ENCODE measurements at regions of chr3 and their contacts with region 1.

Region 1: DNA sequence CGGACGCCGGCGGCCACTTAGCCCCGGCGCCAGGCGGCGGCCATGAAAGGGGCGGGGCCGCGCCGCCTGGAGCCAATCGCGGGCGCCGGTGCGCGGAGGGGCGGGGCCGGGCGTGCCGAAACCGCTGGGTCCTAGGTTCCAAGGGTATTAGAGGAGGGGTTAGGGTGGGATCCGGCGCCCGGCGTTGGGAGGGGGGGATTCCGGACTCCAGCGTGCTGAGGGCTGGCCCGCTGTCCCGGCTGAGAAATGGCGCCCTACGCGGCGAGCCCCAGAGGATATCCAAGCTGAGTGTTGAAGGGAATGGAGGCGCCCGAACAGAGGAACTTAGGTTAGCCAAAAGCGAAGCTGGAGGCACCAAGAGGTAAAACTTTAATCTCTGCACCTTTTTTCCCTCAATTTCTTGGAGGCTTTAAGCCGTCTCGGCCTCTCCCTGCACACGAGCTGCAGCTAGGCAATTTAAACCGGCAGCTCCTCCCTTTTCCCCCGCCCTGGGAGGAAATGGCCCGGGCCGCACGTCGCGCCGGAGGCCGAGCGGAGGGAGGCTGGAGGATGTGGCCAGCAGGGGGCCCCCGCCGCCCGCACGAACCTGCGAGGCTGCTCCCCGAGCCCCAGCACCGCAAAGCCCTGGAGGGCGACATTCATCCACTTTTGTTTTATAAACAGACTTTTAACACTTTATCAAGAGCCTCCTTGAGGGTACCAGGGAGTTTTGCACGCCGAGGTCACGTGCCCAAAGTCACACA is at the start of gene XXYLT1:
- DNase-seq: peak; percentile 94
- ATAC-seq: peak; percentile 89
- H3K4me3 Mint-ChIP-seq: peak within 1 kb of the TSS; percentile 82
- H3K27ac Mint-ChIP-seq: peak within 1 kb of the TSS; percentile 85
- H3K4me1 Mint-ChIP-seq: peaks cover 31% of the 10 kb centered on the region
- H3K27me3 Mint-ChIP-seq: no peaks in the 10 kb centered on the region
- total RNA-seq, gene XXYLT1: 7.2 to 9.2 TPM

Region 2: DNA sequence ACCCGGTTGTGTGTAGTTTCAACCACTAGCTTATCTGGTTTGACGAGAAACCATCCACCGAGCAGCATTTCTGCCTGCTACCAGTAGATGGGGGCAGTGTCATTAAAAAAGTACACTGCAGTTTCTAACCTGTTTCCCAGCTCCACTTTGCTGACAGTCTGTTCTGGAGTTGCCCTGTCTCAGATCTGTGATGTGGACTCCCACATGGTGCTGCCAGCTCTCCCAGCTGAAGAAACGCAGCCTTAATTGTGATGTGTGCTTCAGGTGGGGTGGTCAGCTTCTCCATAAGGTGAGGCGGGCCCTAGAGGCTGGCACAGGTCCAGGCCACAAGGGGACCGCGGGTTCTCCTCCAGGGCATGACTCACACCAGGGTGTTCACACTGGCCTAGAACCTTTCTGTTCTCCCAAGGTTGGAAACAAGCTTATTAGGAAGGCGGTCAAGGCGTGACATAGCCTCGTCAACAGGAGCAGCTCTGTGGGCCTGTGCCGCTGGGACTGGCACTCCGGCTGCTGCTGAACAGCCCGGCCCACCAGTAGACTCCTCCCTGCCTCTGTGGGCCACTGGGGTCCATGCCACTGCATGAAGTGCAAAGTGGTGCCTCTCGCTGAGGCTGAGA is 588.5 kb before region 1 on chr3:
- CTCF ChIA-PET with region 1: interaction called, 28 read pairs
- DNase-seq: peak; percentile 84
- ATAC-seq: peak; percentile 61
- H3K4me3 Mint-ChIP-seq: no peak overlapping the region
- H3K27ac Mint-ChIP-seq: no peak overlapping the region
- H3K4me1 Mint-ChIP-seq: peaks cover 47% of the 10 kb centered on the region
- H3K27me3 Mint-ChIP-seq: peaks cover 37% of the 10 kb centered on the region

Region 3: GRCh38 chr3:195286115-195286872 is 15.0 kb after region 1 on chr3:
- CTCF ChIA-PET with region 1: interaction called, 18 read pairs
- DNase-seq: no peak
- ATAC-seq: no peak
- H3K4me3 Mint-ChIP-seq: no peak overlapping the region
- H3K27ac Mint-ChIP-seq: no peak overlapping the region
- H3K4me1 Mint-ChIP-seq: peaks cover 6% of the 10 kb centered on the region
- H3K27me3 Mint-ChIP-seq: no peaks in the 10 kb centered on the region

Region 4: DNA sequence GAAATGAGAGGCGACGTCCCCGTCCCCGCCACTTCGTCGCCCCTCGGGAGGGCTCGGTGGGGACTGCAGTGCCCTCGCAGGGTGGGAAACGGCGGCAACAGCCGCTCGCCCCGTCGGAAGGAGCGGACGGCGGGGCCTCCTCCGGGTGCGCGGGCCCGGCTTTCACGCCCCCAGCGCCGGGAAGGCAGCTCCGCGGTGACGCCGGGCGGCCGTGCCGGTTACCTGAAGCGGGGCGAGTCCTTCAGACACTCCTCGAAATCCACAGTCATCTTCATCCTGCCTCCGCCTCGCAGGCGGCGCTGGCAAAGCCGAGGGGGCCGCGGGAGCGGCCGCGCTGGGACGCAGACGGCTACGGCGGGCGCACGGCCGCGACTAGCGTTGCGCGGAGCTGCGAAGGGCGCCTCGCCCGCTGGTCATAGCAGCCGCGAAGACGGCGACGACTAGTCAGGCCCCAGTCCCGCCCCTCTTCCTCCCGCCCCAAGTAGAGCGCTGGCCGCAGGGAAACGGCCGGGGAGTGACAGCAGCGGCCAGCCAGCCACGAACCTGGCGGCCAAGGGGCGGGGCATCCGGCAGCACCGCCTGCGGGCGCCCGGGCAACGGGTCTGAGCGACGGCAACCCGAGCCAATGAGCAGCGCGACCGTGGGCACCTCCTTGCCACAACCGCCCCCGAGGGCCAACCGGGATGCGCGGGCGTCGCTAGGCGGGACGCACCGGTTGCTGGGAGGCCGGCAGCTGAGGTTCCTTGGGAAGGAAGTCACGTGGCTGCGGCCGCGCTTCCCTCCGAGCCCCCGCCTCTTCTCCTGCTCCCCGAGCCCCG is 171.5 kb after region 1 on chr3 and contains the start of gene ACAP2:
- CTCF ChIA-PET with region 1: interaction called, 53 read pairs
- DNase-seq: peak; percentile 99
- ATAC-seq: peak; percentile 91
- H3K4me3 Mint-ChIP-seq: peak within 1 kb of the TSS; percentile 94
- H3K27ac Mint-ChIP-seq: peak within 1 kb of the TSS; percentile 91
- H3K4me1 Mint-ChIP-seq: peaks cover 34% of the 10 kb centered on the region
- H3K27me3 Mint-ChIP-seq: no peaks in the 10 kb centered on the region
- total RNA-seq, gene ACAP2: 58.4 to 74.4 TPM

Region 5: GRCh38 chr3:195517030-195517429 is 245.7 kb after region 1 on chr3:
- CTCF ChIA-PET with region 1: interaction called, 228 read pairs
- DNase-seq: no peak
- ATAC-seq: no peak
- H3K4me3 Mint-ChIP-seq: no peak overlapping the region
- H3K27ac Mint-ChIP-seq: no peak overlapping the region
- H3K4me1 Mint-ChIP-seq: peaks cover 19% of the 10 kb centered on the region
- H3K27me3 Mint-ChIP-seq: no peaks in the 10 kb centered on the region

Region 6: DNA sequence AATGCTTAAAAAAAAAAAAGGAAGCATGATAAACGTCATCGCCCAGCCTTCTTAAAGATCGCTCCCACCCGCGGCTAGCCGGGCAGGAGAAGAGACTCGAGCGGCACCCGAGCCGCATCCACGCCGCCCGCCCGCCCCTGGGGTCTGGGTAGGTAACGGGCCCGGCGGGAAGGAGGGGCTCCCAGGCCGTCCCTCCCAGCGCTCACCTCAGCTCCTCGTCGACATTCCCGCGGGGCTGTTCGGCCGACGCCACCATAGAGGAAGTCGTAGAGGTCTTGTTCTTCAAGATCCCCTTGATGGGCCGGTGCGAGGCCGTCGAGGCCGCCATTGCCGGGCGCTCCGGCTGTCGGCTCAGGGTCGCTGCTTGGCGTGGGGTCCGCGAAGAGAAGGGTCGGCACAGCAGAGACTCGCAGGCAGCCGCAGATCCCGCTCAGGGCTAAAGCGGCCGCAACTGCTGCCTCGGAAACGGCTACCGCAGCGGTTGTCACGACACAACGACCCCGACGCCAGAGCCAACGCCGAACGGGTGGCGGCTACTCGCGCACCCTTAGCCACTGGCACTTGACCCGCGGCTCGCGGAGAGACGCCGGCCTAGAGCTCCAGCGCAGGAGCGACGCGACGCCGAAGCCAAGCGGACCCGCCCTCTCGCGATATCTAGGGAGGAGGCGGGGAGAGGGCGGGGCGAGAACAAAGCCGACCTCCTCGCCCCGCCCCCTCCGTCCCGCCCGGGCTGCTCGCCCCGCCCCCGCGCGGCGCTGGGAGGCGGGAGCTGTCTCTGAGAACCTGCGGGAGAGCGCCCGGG is 271.6 kb after region 1 on chr3 and contains the start of gene PPP1R2:
- CTCF ChIA-PET with region 1: interaction called, 115 read pairs
- DNase-seq: peak; percentile 92
- ATAC-seq: peak; percentile 80
- H3K4me3 Mint-ChIP-seq: peak within 1 kb of the TSS; percentile 96
- H3K27ac Mint-ChIP-seq: peak within 1 kb of the TSS; percentile 90
- H3K4me1 Mint-ChIP-seq: peaks cover 72% of the 10 kb centered on the region
- H3K27me3 Mint-ChIP-seq: no peaks in the 10 kb centered on the region
- total RNA-seq, gene PPP1R2: 72.0 to 91.8 TPM